ENCODE measurements at regions of chr2 and their contacts with region 1.

Region 1: DNA sequence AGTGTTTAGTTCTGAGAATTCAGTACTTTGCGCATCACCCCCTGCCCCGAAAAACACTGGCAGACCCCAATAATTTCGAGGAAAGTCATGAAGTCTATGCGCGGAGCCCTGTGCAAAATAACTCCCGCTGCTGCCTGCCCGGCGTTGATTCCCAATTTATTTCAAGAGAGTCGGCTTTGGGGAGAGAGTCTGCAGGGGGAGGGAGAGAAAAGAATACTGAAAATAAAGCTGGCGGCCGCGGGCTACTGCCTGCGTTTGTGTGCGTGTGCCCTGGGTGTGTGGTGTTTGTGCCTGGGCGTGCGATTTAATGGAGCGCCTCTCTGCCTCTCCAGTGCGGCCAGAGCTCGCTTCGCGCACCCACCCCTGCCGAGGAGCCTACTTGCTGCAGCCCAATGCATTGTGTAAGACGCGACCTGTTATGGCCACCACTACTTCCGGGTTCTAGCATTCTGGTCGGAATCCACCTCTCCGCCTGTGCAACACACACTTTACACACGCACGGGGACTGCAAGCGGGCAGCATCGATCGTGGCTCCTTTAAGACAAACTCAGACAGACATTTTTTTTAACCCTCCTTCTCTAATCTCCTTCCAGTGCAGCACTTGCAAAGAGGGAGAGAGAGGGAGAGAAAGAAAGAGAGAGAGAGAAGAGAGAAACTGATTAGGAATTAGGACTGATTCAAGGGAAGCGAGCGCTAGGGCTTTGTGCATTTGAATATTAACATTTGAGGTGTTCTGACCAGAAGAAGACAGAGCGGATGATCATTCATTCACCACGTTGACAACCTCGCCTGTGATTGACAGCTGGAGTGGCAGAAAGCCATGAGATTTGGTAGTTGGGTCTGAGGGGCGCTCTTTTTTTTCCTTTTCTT is at the start of gene MEIS1:
- DNase-seq: peak; percentile 100
- ATAC-seq: peak; percentile 50
- H3K4me3 ChIP-seq: peak within 1 kb of the TSS; percentile 99
- H3K27ac ChIP-seq: peak within 1 kb of the TSS; percentile 99
- H3K4me1 ChIP-seq: peaks cover 5% of the 10 kb centered on the region; the same call in 1 of the 2 replicates
- H3K27me3 ChIP-seq: no peaks in the 10 kb centered on the region
- CTCF ChIP-seq: no peak
- POLR2A ChIP-seq: peak; percentile 99
- RAD21 ChIP-seq: peak; percentile 10
- total RNA-seq, gene MEIS1: 157 and 209 TPM in 2 replicates

Region 2: DNA sequence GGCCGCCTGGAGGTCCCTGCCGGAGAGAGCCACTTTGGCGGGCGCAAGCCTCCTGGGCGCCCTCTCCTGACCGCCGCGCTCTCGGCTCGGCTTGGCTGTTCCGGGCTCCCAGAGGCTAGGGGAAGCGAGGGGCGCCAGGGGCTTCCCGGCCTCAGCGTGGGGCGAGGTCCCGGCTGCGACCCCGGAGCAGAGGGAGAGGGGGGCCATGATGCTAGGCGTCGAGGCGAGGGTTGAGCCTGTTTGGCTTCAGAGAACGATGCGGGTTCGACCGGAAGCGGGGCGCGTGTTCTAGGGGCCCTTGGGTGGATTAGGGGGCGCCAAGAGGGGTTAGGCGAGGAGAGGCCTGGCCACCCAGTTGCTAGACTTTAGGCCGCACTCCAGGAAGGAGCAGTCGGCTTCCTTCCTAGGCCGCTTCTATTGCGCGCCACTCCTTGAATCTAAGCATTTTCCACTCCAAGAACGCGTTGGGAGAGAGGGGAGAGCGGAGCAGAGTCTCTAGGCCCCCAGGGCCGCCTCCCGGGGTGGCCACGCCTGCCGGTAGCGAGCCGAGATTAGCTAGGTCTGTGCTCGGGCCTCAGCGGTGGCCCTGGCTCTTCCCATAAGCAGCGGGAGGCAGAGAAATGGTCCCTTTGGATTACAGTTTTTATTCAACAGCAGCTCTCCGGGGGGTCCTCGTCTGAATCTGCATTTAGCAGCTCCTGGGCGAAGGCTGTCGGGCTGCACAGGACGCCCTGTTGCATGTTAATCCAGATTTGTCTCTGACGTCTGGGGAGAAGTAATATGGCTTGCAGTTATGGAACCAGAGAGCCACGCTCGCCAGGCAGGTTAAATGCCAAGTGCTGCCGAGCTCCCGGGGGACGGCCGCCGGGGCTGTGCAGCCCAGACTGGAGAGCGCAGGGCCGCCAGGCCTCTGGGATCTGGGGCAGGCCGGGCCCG is 11.3 kb after region 1 on chr2:
- CTCF ChIA-PET with region 1: interaction called, 5 read pairs
- POLR2A ChIA-PET with region 1: interaction called, 21 read pairs
- dilution Hi-C with region 1: no loop called
- in situ Hi-C with region 1: no loop called
- intact Hi-C with region 1: no loop called
- DNase-seq: no peak
- ATAC-seq: peak; percentile 33
- H3K4me3 ChIP-seq: peak overlapping the region; percentile 39
- H3K27ac ChIP-seq: peak overlapping the region; percentile 97
- H3K4me1 ChIP-seq: peaks cover 4% of the 10 kb centered on the region
- H3K27me3 ChIP-seq: no peaks in the 10 kb centered on the region
- CTCF ChIP-seq: peak; percentile 19; the same call in 1 of the 2 replicates
- POLR2A ChIP-seq: peak; percentile 54; the same call in 1 of the 2 replicates
- RAD21 ChIP-seq: no peak

Region 3: GRCh38 chr2:66851449-66851872 is 416.5 kb after region 1 on chr2:
- CTCF ChIA-PET with region 1: no interaction called
- POLR2A ChIA-PET with region 1: no interaction called
- dilution Hi-C with region 1: no loop called
- in situ Hi-C with region 1: loop called (anchors 10 kb)
- intact Hi-C with region 1: loop called (anchors 5 kb)
- DNase-seq: peak; percentile 99
- ATAC-seq: peak; percentile 89
- H3K4me3 ChIP-seq: no peak overlapping the region
- H3K27ac ChIP-seq: peak overlapping the region; percentile 60
- H3K4me1 ChIP-seq: peaks cover 25% of the 10 kb centered on the region
- H3K27me3 ChIP-seq: no peaks in the 10 kb centered on the region
- CTCF ChIP-seq: no peak
- POLR2A ChIP-seq: no peak
- RAD21 ChIP-seq: no peak; the same call in 1 of the 2 replicates

Region 4: GRCh38 chr2:67259581-67260342 is 824.8 kb after region 1 on chr2:
- CTCF ChIA-PET with region 1: no interaction called
- POLR2A ChIA-PET with region 1: interaction called, 3 read pairs
- dilution Hi-C with region 1: no loop called
- in situ Hi-C with region 1: loop called (anchors 10 kb)
- intact Hi-C with region 1: loop called (anchors 2 kb)
- DNase-seq: peak; percentile 94
- ATAC-seq: peak; percentile 19
- H3K4me3 ChIP-seq: no peak overlapping the region
- H3K27ac ChIP-seq: peak overlapping the region; percentile 63
- H3K4me1 ChIP-seq: peaks cover 20% of the 10 kb centered on the region
- H3K27me3 ChIP-seq: no peaks in the 10 kb centered on the region
- CTCF ChIP-seq: no peak
- POLR2A ChIP-seq: peak; percentile 91
- RAD21 ChIP-seq: no peak

Region 5: DNA sequence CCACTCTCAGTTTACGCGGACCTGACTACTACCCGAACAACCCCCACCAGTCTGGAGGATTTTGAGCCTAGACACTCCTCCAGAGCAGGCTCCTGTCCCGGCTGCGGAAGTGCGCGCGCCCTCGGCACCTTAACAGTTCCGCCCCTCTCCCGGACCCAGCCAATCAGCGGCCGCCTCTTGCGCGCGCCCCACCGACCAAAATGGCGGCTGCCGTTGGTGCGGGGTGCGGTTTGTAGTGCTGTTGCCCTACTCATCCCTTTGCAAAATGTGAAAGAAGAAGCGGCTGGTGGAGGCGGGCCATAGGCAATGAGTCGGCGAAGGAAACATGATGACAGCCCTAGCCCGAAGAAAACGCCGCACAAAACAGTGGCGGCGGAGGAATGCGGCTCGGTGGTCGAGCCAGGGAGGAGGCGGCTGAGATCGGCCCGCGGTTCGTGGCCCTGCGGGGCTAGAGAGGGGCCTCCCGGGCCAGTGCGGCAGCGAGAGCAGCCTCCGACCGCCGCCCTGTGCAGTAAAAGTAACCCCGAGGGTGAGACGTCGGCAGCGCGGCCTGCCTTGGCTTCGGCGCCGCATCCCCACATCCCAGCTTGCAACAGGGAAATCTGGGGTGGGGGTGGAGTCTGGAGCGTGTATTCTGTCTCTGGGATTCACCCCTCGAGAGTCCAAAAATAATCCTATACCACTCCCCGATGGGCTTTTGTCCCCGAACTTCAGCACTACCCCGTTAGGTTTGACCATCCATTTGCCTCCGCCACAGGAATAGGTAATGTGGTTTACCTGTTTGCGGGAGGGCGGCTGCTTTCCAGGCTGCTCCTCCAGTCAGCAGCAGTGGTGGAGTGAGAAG is 962.5 kb after region 1 on chr2 and contains the start of gene ETAA1:
- CTCF ChIA-PET with region 1: no interaction called
- POLR2A ChIA-PET with region 1: interaction called, 3 read pairs
- dilution Hi-C with region 1: no loop called
- in situ Hi-C with region 1: no loop called
- intact Hi-C with region 1: loop called (anchors 5 kb)
- DNase-seq: peak; percentile 90
- ATAC-seq: peak; percentile 96
- H3K4me3 ChIP-seq: peak within 1 kb of the TSS; percentile 87
- H3K27ac ChIP-seq: peak within 1 kb of the TSS; percentile 96
- H3K4me1 ChIP-seq: peaks cover 9% of the 10 kb centered on the region
- H3K27me3 ChIP-seq: no peaks in the 10 kb centered on the region
- CTCF ChIP-seq: no peak
- POLR2A ChIP-seq: peak; percentile 83
- RAD21 ChIP-seq: peak; percentile 25
- total RNA-seq, gene ETAA1: 8.1 and 19.2 TPM in 2 replicates

Region 6: DNA sequence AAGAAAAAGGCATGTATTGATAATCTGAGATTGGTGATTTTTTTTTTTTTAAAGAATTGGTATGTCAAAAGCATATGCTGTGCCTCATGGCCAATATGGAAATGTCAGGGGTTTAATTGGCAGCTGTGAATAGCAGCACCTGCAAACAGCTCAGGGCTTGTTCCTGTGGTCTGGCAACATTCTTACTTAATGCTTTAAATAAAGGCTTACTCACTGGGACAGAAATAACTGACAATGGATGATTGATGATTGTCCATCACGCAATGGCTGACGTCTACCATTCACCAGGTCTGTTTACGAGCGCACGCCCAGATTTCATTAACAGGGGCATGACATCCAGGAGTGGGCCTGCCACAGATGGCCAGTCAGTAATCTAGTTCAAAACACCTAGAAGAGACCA is 1028.9 kb after region 1 on chr2:
- CTCF ChIA-PET with region 1: no interaction called
- POLR2A ChIA-PET with region 1: no interaction called
- dilution Hi-C with region 1: no loop called
- in situ Hi-C with region 1: no loop called
- intact Hi-C with region 1: no loop called
- DNase-seq: peak; percentile 67
- ATAC-seq: no peak
- H3K4me3 ChIP-seq: no peak overlapping the region
- H3K27ac ChIP-seq: no peak overlapping the region
- H3K4me1 ChIP-seq: no peaks in the 10 kb centered on the region
- H3K27me3 ChIP-seq: no peaks in the 10 kb centered on the region
- CTCF ChIP-seq: no peak
- POLR2A ChIP-seq: no peak
- RAD21 ChIP-seq: no peak

Region 7: GRCh38 chr2:67846370-67847070 is 1411.6 kb after region 1 on chr2:
- CTCF ChIA-PET with region 1: no interaction called
- POLR2A ChIA-PET with region 1: interaction called, 3 read pairs
- dilution Hi-C with region 1: no loop called
- in situ Hi-C with region 1: loop called (anchors 5 kb)
- intact Hi-C with region 1: loop called (anchors 2 kb)
- DNase-seq: peak; percentile 98
- ATAC-seq: peak; percentile 87
- H3K4me3 ChIP-seq: no peak overlapping the region
- H3K27ac ChIP-seq: no peak overlapping the region
- H3K4me1 ChIP-seq: peaks cover 6% of the 10 kb centered on the region
- H3K27me3 ChIP-seq: no peaks in the 10 kb centered on the region
- CTCF ChIP-seq: peak; percentile 78
- POLR2A ChIP-seq: no peak
- RAD21 ChIP-seq: peak; percentile 74